Breast epithelium (tissue), 4 donors: ENCODE measurements at regions of chrX and their contacts with region 1.

Region 1: GRCh38 chrX:16914058-16914457 is 32.4 kb upstream of the REPS2 start:
- DNase-seq: no peak
- H3K4me3 ChIP-seq: no peak overlapping the region
- H3K27ac ChIP-seq: no peak overlapping the region
- H3K4me1 ChIP-seq: no peaks in the 10 kb centered on the region
- H3K27me3 ChIP-seq: peaks cover 0 to 34% of the 10 kb centered on the region in 2 donors
- CTCF ChIP-seq: no peak
- POLR2A ChIP-seq: no peak

Region 2: DNA sequence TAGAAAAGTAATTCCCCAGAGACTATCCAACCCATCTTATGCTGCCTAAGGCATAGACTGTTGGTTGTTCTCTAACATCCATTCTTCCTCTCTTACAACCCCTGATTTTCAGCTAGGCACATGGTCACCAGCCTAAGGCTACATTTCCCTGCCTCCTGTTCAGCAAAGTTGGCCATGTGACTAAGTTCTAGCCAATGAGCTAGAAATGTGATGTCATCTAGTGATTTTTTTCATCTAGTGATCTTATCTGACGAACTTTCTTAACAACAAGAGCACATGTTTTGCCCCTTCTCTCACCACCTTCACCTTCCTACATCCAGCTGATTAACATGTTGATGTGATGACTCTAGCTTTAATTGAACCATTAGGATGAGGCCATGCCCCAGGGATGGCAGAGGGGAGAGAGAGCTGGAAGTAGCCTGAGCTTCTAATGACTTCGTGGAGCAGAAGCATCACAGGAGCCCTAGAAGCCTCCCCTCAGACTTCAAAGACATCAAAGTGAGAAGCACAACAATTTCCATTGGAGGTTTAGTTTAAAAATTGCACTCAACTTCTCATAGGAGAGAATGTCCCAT is 366.3 kb before region 1 on chrX:
- intact Hi-C with region 1: loop called (anchors 5 kb)
- DNase-seq: no peak
- H3K4me3 ChIP-seq: no peak overlapping the region
- H3K27ac ChIP-seq: no peak overlapping the region
- H3K4me1 ChIP-seq: no peaks in the 10 kb centered on the region
- H3K27me3 ChIP-seq: peaks cover 0 to 21% of the 10 kb centered on the region in 2 donors
- CTCF ChIP-seq: no peak
- POLR2A ChIP-seq: no peak

Region 3: GRCh38 chrX:16852617-16853179 is 61.4 kb before region 1 on chrX:
- intact Hi-C with region 1: no loop called
- DNase-seq: no peak
- H3K4me3 ChIP-seq: no peak overlapping the region
- H3K27ac ChIP-seq: no peak overlapping the region
- H3K4me1 ChIP-seq: no peaks in the 10 kb centered on the region
- H3K27me3 ChIP-seq: peaks cover 0 to 30% of the 10 kb centered on the region in 2 donors
- CTCF ChIP-seq: no peak
- POLR2A ChIP-seq: no peak

Region 4: GRCh38 chrX:16946361-16946964 is 32.4 kb after region 1 on chrX and contains the start of gene REPS2:
- intact Hi-C with region 1: loop called (anchors 2 kb)
- DNase-seq: peak; percentile 86 to 87
- H3K4me3 ChIP-seq: peak within 1 kb of the TSS; percentile 57 to 79 (median 65)
- H3K27ac ChIP-seq: peak within 1 kb of the TSS; percentile 48 to 65
- H3K4me1 ChIP-seq: no peaks in the 10 kb centered on the region
- H3K27me3 ChIP-seq: peaks cover 0 to 16% of the 10 kb centered on the region in 2 donors
- CTCF ChIP-seq: no peak
- POLR2A ChIP-seq: no peak
- total RNA-seq, gene REPS2: 9.6 to 21.4 (median 13.1) TPM